ENCODE measurements at regions of chr16 and their contacts with region 1.

Region 1: GRCh38 chr16:2883027-2883851 is at the start of gene FLYWCH2:
- DNase-seq: peak; percentile 91
- ATAC-seq: peak; percentile 88
- H3K4me3 ChIP-seq: peak within 1 kb of the TSS; percentile 86 to 95 (median 94)
- H3K27ac ChIP-seq: peak within 1 kb of the TSS; percentile 76
- H3K4me1 ChIP-seq: peaks cover 9% of the 10 kb centered on the region
- H3K27me3 ChIP-seq: no peaks in the 10 kb centered on the region
- CTCF ChIP-seq: peak; percentile 37; the same call in 1 of the 2 replicates
- EP300 ChIP-seq: no peak
- POLR2A ChIP-seq: peak; percentile 73 to 83
- RAD21 ChIP-seq: no peak
- total RNA-seq, gene FLYWCH2: 19.8 and 20.2 TPM in 2 replicates

Region 2: DNA sequence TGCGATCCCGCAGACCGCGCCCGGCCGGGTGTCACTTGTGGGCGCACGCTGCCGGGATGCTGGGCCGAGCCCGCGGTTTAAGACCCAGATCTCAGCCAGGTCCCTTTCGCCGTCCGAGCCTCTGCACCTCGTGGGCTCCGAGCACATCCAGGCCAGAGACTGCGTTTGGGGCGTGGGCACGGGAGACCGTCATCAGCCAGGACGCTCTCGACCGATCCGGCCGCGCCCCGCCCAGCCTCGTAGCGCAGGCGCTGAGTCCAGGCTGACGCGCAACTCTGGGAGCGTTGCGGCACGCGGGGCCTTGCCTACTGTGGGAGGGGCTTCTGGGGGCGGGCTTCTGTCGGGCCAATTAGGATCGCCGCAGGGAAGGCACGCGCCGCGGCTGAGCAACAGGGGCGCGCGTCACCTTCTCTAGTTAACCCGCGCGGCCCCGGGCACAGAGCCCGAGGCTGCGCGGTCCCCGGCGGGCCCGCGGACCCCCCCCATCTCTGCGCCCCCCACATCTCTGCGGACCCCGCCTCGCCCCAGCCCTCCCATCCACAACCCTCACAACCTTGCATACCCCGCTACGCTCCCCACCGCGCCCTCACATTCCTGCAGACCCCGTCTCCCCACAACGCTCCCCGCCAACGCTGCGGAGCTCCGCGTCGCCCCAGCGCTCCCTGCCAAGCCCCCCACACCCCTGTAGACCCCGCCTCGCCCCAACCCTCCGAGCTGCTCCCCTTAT is 351.3 kb before region 1 on chr16:
- CTCF ChIA-PET with region 1: no interaction called
- POLR2A ChIA-PET with region 1: no interaction called
- in situ Hi-C with region 1: no loop called
- intact Hi-C with region 1: no loop called
- DNase-seq: peak; percentile 92
- ATAC-seq: peak; percentile 76
- H3K4me3 ChIP-seq: peak overlapping the region; percentile 47 to 77 (median 69); a peak in 5 of 6 replicates
- H3K27ac ChIP-seq: peak overlapping the region; percentile 75
- H3K4me1 ChIP-seq: peaks cover 59% of the 10 kb centered on the region
- H3K27me3 ChIP-seq: no peaks in the 10 kb centered on the region
- CTCF ChIP-seq: peak; percentile 17; the same call in 1 of the 2 replicates
- EP300 ChIP-seq: no peak
- POLR2A ChIP-seq: peak; percentile 43 to 90; a peak in 3 of 4 replicates
- RAD21 ChIP-seq: peak; percentile 48; the same call in 1 of the 2 replicates

Region 3: GRCh38 chr16:2897113-2897512 is 13.9 kb after region 1 on chr16:
- CTCF ChIA-PET with region 1: no interaction called
- POLR2A ChIA-PET with region 1: interaction called, 24 read pairs
- in situ Hi-C with region 1: no loop called
- intact Hi-C with region 1: no loop called
- DNase-seq: no peak
- ATAC-seq: no peak
- H3K4me3 ChIP-seq: no peak overlapping the region
- H3K27ac ChIP-seq: no peak overlapping the region
- H3K4me1 ChIP-seq: peaks cover 46% of the 10 kb centered on the region
- H3K27me3 ChIP-seq: no peaks in the 10 kb centered on the region
- CTCF ChIP-seq: no peak
- EP300 ChIP-seq: no peak
- POLR2A ChIP-seq: no peak
- RAD21 ChIP-seq: no peak

Region 4: DNA sequence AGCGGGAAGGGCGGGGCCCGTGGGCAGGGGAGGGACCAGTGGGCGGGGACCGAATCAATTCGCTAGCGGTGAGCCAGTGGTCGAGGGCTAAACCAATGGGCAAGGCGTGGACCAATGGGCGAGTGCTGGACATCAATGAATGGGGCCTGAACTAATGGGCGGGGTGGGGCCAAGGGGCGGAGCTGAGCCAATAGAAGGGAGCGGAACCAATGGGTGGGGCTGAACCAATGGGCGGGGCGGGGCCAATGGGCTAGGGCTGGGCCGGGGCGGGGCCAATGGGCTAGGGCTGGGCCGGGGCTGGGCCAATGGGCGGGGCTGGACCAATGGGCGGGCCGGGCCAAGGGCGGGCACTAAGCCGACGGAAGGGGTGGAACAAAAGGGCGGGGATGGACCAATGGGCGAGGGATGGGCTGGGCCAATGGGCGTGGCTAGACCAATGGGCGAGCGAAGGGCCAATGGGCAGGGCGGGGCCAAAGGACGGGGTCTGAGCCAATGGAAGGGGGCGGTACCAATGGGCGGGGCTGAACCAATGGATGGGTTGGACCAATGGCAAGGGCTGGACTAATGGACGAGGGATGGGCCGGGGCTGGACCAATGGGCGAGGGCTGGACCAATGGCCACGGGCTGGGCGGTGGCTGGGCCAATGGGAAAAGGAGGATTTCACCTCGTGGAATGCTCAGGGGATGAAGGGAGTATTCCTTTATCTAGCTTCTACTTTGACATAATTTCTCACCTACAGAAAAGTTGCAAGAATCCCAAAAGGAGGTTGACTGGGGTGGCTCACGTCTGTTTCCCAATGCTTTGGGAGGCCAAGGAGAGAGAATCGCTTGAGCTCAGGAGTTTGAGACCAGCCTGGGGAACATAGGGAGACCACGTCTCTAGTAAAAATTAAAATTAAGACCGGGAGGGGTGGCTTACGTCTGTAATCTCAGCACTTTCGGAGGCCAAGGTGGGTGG is 22.5 kb after region 1 on chr16:
- CTCF ChIA-PET with region 1: interaction called, 3 read pairs
- POLR2A ChIA-PET with region 1: interaction called, 96 read pairs
- in situ Hi-C with region 1: no loop called
- intact Hi-C with region 1: loop called (anchors 2 kb)
- DNase-seq: peak; percentile 97
- ATAC-seq: peak; percentile 81
- H3K4me3 ChIP-seq: peak overlapping the region; percentile 82 to 96 (median 95); a peak in 5 of 6 replicates
- H3K27ac ChIP-seq: peak overlapping the region; percentile 83
- H3K4me1 ChIP-seq: peaks cover 19% of the 10 kb centered on the region
- H3K27me3 ChIP-seq: no peaks in the 10 kb centered on the region; a peak in 1 of 5 replicates
- CTCF ChIP-seq: no peak
- EP300 ChIP-seq: no peak
- POLR2A ChIP-seq: no peak
- RAD21 ChIP-seq: no peak

Region 5: GRCh38 chr16:2911580-2912329 is 28.5 kb after region 1 on chr16 and contains the start of gene FLYWCH1:
- CTCF ChIA-PET with region 1: interaction called, 3 read pairs
- POLR2A ChIA-PET with region 1: interaction called, 96 read pairs
- in situ Hi-C with region 1: no loop called
- intact Hi-C with region 1: no loop called
- DNase-seq: peak; percentile 92
- ATAC-seq: peak; percentile 93
- H3K4me3 ChIP-seq: peak within 1 kb of the TSS; percentile 65 to 76 (median 76)
- H3K27ac ChIP-seq: peak within 1 kb of the TSS; percentile 44
- H3K4me1 ChIP-seq: peaks cover 18% of the 10 kb centered on the region
- H3K27me3 ChIP-seq: no peaks in the 10 kb centered on the region; a peak in 1 of 5 replicates
- CTCF ChIP-seq: 0 out of 2 replicates have a peak, but pooled peaks have one; percentile 24
- EP300 ChIP-seq: peak in 1 of 2 experiments; percentile 15; a peak in 1 of 4 replicates
- POLR2A ChIP-seq: peak; percentile 24 to 71; a peak in 2 of 4 replicates
- RAD21 ChIP-seq: peak; percentile 58; the same call in 1 of the 2 replicates
- total RNA-seq, gene FLYWCH1: 9.9 and 12.4 TPM in 2 replicates

Measured in HepG2 (cell line).